ENCODE measurements at regions of chr15 and their contacts with region 1.

Region 1: GRCh38 chr15:20280933-20281463 is 260.6 kb downstream of the GOLGA6L6 start:
- DNase-seq: peak in 1 of 2 donors; percentile 25
- ATAC-seq: peak in 1 of 3 donors; percentile 22
- H3K4me3 ChIP-seq: no peak overlapping the region
- H3K4me3 Mint-ChIP-seq: no peak overlapping the region
- H3K27ac ChIP-seq: no peak overlapping the region
- H3K27ac Mint-ChIP-seq: no peak overlapping the region
- H3K4me1 ChIP-seq: no peaks in the 10 kb centered on the region
- H3K4me1 Mint-ChIP-seq: no peaks in the 10 kb centered on the region
- H3K27me3 ChIP-seq: no peaks in the 10 kb centered on the region
- H3K27me3 Mint-ChIP-seq: no peaks in the 10 kb centered on the region
- CTCF ChIP-seq: no peak

Region 2: GRCh38 chr15:20294651-20295237 is 13.7 kb after region 1 on chr15:
- intact Hi-C with region 1: no loop called
- DNase-seq: peak in 1 of 2 donors; percentile 25
- ATAC-seq: no peak
- H3K4me3 ChIP-seq: no peak overlapping the region
- H3K4me3 Mint-ChIP-seq: no peak overlapping the region
- H3K27ac ChIP-seq: no peak overlapping the region
- H3K27ac Mint-ChIP-seq: no peak overlapping the region
- H3K4me1 ChIP-seq: no peaks in the 10 kb centered on the region
- H3K4me1 Mint-ChIP-seq: no peaks in the 10 kb centered on the region
- H3K27me3 ChIP-seq: no peaks in the 10 kb centered on the region
- H3K27me3 Mint-ChIP-seq: no peaks in the 10 kb centered on the region
- CTCF ChIP-seq: no peak

Region 3: DNA sequence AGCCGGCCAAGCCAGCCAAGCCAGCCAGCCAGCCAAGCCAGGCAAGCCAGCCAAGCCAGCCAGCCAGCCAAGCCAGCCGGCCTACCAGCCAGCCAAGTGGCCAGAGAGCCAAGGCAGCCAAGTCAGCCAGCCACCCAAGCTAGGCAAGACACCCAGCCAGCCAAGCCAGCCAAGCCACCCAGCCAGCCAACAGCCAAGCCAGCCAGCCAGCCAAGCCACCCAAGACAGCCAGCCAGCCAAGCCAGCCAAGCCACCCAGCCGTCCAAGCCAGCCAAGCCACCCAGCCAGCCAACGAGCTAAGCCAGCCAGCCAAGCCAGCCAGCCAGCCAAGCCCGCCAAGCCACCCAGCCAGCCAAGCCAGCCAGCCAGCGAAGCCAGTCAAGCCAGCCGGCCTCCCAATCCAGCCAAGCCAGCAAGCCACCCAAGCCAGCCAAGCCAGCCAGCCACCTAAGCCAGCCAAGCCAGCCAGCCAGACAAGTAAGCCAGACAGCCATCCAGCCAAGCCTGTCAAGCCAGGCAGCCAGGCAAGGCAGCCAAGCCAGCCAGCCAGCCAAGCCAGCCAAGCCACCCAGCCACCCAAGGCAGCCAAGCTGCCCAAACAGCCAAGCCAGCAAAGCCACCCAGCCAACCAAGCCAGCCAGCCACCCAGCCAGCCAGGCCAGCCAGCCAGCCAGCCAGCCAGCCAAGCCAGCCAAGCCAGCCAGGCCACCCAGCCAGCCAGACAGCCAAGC is 60.1 kb after region 1 on chr15:
- intact Hi-C with region 1: loop called (anchors 5 kb)
- DNase-seq: peak; percentile 38 to 77
- ATAC-seq: peak in 2 of 3 donors; percentile 12 to 35
- H3K4me3 ChIP-seq: no peak overlapping the region
- H3K4me3 Mint-ChIP-seq: no peak overlapping the region
- H3K27ac ChIP-seq: no peak overlapping the region
- H3K27ac Mint-ChIP-seq: no peak overlapping the region
- H3K4me1 ChIP-seq: no peaks in the 10 kb centered on the region
- H3K4me1 Mint-ChIP-seq: no peaks in the 10 kb centered on the region
- H3K27me3 ChIP-seq: no peaks in the 10 kb centered on the region
- H3K27me3 Mint-ChIP-seq: no peaks in the 10 kb centered on the region
- CTCF ChIP-seq: no peak